ENCODE measurements at regions of chrX and their contacts with region 1.

Region 1: GRCh38 chrX:44265559-44265958 is 77.9 kb downstream of the EFHC2 start:
- DNase-seq: peak in 5 of 9 donors; percentile 13 to 46 (median 21)
- ATAC-seq: peak; percentile 45
- H3K4me3 ChIP-seq: peak overlapping the region; percentile 30
- H3K4me3 Mint-ChIP-seq: peak overlapping the region in 9 of 10 donors; percentile 36 to 79 (median 70)
- H3K27ac ChIP-seq: peak overlapping the region; percentile 46
- H3K27ac Mint-ChIP-seq: peak overlapping the region in 8 of 9 donors; percentile 2 to 87 (median 67)
- H3K4me1 ChIP-seq: peaks cover 15 to 24% of the 10 kb centered on the region in 2 donors
- H3K4me1 Mint-ChIP-seq: peaks cover 18 to 81% (median 54%) of the 10 kb centered on the region in 7 donors
- H3K27me3 ChIP-seq: no peaks in the 10 kb centered on the region
- H3K27me3 Mint-ChIP-seq: no peaks in the 10 kb centered on the region

Region 2: GRCh38 chrX:44253575-44253942 is 12.0 kb before region 1 on chrX:
- CTCF ChIA-PET with region 1: interaction called, 7 read pairs
- POLR2A ChIA-PET with region 1: interaction called, 6 read pairs
- intact Hi-C with region 1: loop called in 1 of 2 experiments (anchors 1 kb)
- DNase-seq: no peak
- ATAC-seq: no peak
- H3K4me3 ChIP-seq: peak overlapping the region; percentile 14
- H3K4me3 Mint-ChIP-seq: peak overlapping the region; percentile 59 to 84 (median 72)
- H3K27ac ChIP-seq: peak overlapping the region; percentile 56
- H3K27ac Mint-ChIP-seq: peak overlapping the region; percentile 80 to 97 (median 91)
- H3K4me1 ChIP-seq: peaks cover 7 to 12% of the 10 kb centered on the region in 2 donors
- H3K4me1 Mint-ChIP-seq: peaks cover 15 to 64% (median 33%) of the 10 kb centered on the region in 7 donors
- H3K27me3 ChIP-seq: no peaks in the 10 kb centered on the region
- H3K27me3 Mint-ChIP-seq: no peaks in the 10 kb centered on the region